ENCODE measurements at regions of chr3 and their contacts with region 1.

Region 1: DNA sequence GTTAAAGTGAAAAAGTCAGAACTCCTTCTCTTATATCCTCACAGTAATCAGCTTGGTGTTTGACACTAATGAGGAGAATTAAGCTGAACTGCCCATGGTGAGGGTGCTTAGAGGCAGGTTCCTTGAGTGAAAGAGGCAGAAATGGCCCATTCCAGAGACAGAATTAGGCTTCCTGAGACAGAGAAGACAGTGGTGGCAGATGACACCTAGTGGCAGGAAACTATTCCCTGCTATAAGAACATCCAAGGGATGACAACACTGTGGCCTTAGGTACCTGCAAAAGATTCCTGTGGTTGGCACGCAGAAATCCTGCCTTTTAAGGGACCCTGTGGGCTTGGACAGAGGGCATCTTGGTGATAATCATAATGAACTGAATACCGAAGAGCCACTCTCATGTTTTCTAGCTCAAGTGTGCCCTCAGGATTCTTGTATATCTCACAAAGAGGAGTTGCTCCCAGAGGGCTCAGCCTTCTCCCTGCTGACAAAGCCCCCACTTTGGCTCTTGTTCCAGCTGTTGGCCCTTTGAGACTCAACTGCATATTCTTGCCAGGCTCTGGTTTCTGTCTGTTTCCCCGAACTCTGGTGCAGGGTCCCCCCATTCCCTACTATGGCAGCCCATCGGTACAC is 56.0 kb downstream of the KBTBD12 start:
- DNase-seq: peak in 4 of 10 donors; percentile 18 to 65 (median 55)
- H3K4me3 ChIP-seq: no peak overlapping the region
- H3K27ac ChIP-seq: no peak overlapping the region
- H3K27me3 ChIP-seq: no peaks in the 10 kb centered on the region
- CTCF ChIP-seq: peak; percentile 58 to 85 (median 74)

Region 2: DNA sequence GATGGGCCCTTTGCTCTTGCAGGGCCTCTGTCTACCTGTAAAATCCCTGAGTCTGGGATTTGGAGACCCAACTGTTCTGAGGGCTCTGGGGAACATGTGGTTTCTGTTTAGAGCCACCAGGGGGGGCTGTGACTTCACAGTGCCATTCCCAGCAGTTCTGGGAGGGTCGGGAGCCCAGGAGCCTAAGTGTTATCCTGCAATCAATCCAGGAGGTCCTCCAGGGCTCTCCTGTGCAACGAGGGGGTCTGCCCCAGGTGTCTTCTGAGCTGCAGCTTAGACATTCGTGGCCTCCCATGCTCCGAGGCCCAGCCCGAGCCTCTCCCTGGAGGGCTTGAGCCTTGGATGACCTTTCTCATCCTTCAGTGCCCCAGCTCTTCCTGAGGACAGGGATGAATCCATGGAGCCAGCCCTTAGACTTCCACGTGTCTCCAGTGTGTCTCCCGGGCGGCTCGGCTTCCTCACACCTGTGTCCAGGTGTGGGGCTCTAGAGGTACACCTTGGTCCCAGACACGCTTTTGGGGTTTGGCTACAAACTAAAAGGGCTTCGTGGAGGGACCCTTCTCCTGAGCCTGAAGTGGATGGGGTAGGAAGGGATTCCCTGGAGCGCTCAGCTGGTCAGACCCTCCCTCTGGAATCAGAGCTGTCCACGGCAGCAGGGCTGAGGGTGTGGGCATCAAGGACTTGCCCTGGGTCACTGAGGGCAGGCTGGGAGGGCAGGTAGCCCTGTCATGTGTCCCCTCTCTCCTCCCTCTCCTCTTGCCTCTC is 318.7 kb before region 1 on chr3:
- intact Hi-C with region 1: loop called (anchors 5 to 10 kb)
- DNase-seq: peak in 6 of 10 donors; percentile 51 to 75 (median 64)
- H3K4me3 ChIP-seq: no peak overlapping the region
- H3K27ac ChIP-seq: peak overlapping the region in 6 of 59 donors; percentile 3 to 54 (median 18)
- H3K27me3 ChIP-seq: no peaks in the 10 kb centered on the region
- CTCF ChIP-seq: peak; percentile 64 to 96 (median 89)